ENCODE measurements at regions of chr20 and their contacts with region 1.

Region 1: GRCh38 chr20:4091490-4092479 is 76.4 kb upstream of the RNF24 start:
- DNase-seq: no peak
- H3K4me3 ChIP-seq: no peak overlapping the region
- H3K27ac ChIP-seq: peak overlapping the region; percentile 99
- H3K27me3 ChIP-seq: no peaks in the 10 kb centered on the region
- CTCF ChIP-seq: peak; percentile 84

Region 2: DNA sequence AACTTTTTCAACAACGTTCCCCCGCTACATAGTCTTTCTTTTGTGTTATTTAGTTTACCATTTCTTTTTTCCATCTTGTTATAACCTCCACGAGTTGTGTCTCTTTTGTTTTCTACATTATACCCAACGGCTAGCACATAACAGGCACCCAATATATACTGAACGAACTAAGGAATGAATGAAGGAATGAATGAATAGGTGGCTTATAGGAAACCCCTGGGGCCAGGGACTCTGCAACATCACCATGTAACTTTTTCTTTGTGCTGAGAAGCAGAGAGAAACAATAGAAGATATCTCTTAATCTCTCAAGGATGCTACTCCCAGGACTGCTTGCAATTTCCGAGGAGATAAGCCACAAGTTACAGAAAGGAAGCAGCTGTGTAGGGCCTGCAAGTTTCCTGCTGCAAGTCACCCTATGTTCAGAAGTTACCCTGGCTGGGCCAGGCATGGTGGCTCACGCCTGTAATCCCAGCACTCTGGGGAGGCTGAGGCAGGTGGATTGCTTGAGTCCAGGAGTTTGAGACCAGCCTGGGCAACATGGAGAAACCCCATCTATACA is 252.5 kb before region 1 on chr20:
- CTCF ChIA-PET with region 1: no interaction called
- POLR2A ChIA-PET with region 1: no interaction called
- DNase-seq: no peak
- H3K4me3 ChIP-seq: no peak overlapping the region
- H3K27ac ChIP-seq: no peak overlapping the region
- H3K27me3 ChIP-seq: no peaks in the 10 kb centered on the region
- CTCF ChIP-seq: no peak

Region 3: GRCh38 chr20:3970016-3970415 is 121.8 kb before region 1 on chr20:
- CTCF ChIA-PET with region 1: no interaction called
- POLR2A ChIA-PET with region 1: no interaction called
- DNase-seq: no peak
- H3K4me3 ChIP-seq: no peak overlapping the region
- H3K27ac ChIP-seq: no peak overlapping the region
- H3K27me3 ChIP-seq: no peaks in the 10 kb centered on the region
- CTCF ChIP-seq: no peak

Region 4: DNA sequence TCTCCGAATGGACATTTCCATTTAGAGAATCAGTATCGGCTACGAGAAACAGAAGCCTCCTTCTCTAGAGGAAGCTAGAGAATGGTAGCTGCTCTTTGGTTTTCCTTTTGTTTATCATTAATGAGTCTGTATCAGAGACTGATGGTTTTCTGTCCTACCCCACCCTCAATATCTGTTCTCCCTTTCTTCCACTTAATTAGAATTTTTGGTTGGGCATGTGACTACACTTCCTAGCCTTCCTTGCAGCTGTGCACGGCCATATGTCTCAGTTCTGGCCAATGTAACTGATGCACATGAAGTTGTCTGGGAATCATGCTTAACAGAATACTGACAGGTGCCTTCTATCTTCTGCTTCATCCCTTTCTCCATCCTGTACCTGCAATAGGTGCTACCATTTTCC is 95.4 kb before region 1 on chr20:
- CTCF ChIA-PET with region 1: no interaction called
- POLR2A ChIA-PET with region 1: no interaction called
- DNase-seq: no peak
- H3K4me3 ChIP-seq: no peak overlapping the region
- H3K27ac ChIP-seq: no peak overlapping the region
- H3K27me3 ChIP-seq: no peaks in the 10 kb centered on the region
- CTCF ChIP-seq: no peak

Region 5: GRCh38 chr20:4014031-4014474 is 77.7 kb before region 1 on chr20:
- CTCF ChIA-PET with region 1: interaction called, 11 read pairs
- POLR2A ChIA-PET with region 1: no interaction called
- DNase-seq: peak; percentile 47
- H3K4me3 ChIP-seq: peak overlapping the region; percentile 92
- H3K27ac ChIP-seq: peak overlapping the region; percentile 21
- H3K27me3 ChIP-seq: no peaks in the 10 kb centered on the region
- CTCF ChIP-seq: peak; percentile 81

Region 6: DNA sequence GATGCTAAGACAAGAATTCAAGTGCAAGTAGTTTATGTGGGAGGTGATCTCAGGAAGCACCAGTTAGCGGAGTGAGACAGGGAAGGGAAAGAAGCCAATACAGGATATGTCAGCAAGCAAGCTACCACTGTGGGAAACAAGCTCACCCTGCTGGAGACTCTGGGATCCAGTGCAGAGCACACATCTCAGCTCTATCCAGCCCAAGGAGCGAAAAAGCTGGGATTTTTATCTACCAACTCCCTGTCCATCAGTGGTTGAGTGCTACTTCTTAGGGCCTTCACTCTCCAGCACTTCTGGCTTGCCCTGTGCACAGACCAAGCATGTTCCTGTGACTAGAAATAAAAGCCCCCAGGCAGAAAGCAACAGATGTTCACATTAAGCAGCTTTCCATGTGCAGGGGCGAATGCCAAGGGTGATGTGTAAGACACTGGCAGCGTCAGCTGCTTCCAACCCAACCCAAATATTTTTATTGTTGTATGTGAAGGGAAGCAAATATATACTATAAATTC is 65.6 kb before region 1 on chr20:
- CTCF ChIA-PET with region 1: interaction called, 11 read pairs
- POLR2A ChIA-PET with region 1: no interaction called
- DNase-seq: peak; percentile 68
- H3K4me3 ChIP-seq: no peak overlapping the region
- H3K27ac ChIP-seq: peak overlapping the region; percentile 59
- H3K27me3 ChIP-seq: no peaks in the 10 kb centered on the region
- CTCF ChIP-seq: peak; percentile 69

Region 7: DNA sequence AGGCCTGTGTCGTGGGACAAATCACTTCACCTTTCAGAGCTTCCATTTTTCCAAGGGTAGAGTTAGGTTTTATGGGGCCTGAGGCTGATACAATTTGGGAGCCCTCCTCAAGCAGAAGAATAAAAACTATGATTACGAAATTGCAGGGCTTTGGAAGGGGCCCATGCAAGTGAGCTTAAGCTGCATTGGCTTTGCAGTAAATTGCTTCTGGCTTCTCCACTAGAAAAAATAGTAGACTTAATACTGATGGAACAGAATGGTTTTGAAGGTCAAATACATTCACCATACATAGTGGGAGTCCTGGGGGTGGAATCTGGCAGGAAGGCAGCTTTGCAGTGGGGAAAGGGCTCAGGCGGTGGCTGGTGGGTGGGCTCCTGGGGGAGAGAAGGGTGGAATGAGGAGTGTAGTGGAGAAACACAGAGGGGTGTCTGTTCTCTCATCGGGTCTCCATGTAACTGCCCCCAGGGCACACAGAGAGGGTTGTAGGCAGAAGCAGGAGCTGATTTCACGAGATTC is 20.5 kb before region 1 on chr20:
- CTCF ChIA-PET with region 1: interaction called, 13 read pairs
- POLR2A ChIA-PET with region 1: no interaction called
- DNase-seq: no peak
- H3K4me3 ChIP-seq: no peak overlapping the region
- H3K27ac ChIP-seq: no peak overlapping the region
- H3K27me3 ChIP-seq: no peaks in the 10 kb centered on the region
- CTCF ChIP-seq: no peak